ENCODE measurements at regions of chr1 and their contacts with region 1.

Region 1: DNA sequence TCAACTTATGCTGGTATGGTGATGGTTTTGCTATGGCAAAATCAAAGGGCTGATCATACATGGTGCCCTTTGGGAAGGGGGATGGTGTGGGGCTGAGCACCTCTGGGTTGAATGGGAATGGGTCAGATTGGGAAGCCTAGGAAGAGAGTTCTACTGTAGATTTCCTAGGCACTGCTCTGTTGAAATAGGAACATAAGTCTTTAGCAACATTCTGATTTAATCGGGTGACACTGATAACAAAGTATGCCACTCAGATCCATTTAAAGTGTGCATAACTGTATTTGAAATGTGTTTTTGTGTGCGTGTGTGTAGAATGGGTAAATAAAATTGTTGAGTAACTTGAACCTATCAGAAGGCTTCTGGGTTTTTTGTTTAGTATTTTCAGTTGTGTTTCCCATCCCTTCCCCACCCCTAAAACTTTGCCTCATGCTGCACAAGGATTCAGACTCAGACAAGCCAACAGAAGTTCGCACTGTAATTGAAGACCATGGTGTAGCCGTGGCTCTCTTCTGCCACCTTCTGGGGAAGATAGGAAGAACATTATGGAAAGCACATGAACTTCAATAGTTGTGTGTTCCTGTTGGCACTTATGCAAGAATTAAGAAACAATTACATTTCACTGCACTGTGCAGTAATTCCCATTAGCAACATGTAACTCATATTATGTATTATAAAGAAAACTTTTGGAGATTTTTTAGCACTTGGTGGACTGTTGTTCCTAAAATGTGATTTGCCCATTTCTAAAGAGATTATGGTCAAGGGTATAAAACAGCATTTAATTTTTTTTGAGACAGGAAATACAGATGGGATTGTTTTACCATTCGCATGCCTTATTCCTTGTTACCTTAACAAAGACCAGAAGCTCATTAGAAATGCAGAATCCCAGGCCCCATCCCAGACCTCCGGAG is 10.9 kb upstream of the C4BPB start:
- DNase-seq: no peak
- H3K4me3 ChIP-seq: no peak overlapping the region
- H3K27ac ChIP-seq: no peak overlapping the region
- H3K4me1 ChIP-seq: peaks cover 0 to 30% (median 5%) of the 10 kb centered on the region in 4 donors
- H3K27me3 ChIP-seq: no peaks in the 10 kb centered on the region
- CTCF ChIP-seq: peak; percentile 77 to 89 (median 81)
- EP300 ChIP-seq: no peak
- POLR2A ChIP-seq: no peak

Region 2: DNA sequence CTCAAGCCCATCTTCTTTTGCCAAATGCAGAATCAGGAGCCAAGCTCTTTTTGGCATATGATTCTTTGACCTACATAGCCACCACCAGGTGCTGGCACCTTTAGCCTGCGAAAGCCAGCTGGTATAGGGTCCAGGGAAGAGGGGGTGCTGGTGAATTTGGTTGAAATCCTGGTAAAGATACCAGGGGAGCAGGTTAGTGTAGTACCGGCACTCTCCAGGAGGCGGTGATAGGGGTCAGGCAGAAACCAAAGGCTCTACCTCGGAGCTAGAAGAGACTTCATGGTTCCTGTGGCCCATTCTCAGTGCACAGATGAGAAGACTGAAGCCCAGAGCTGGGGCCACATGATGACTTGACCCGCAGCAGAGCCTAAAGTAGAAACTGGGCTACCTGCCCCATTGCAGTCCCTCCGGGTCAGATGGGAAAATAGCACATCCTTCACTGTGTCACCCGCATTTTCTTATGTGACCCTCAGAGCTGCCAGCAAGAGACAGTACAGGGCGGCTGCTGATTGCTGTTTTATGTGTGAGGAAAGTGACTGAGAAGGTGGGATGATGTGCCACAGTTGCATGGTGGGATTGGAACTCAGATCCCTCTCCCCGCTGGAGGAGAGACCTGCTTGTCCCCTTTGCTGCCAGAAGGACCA is 343.1 kb before region 1 on chr1:
- intact Hi-C with region 1: loop called (anchors 10 kb)
- DNase-seq: no peak
- H3K4me3 ChIP-seq: no peak overlapping the region
- H3K27ac ChIP-seq: no peak overlapping the region
- H3K4me1 ChIP-seq: peaks cover 19 to 41% (median 33%) of the 10 kb centered on the region in 4 donors
- H3K27me3 ChIP-seq: no peaks in the 10 kb centered on the region
- CTCF ChIP-seq: peak; percentile 51 to 77 (median 60)
- EP300 ChIP-seq: no peak
- POLR2A ChIP-seq: no peak

Region 3: GRCh38 chr1:207052911-207053769 is 24.6 kb before region 1 on chr1 and contains the start of gene PFKFB2:
- intact Hi-C with region 1: loop called (anchors 2 kb)
- DNase-seq: peak; percentile 98
- H3K4me3 ChIP-seq: peak within 1 kb of the TSS; percentile 67 to 78 (median 69)
- H3K27ac ChIP-seq: peak within 1 kb of the TSS; percentile 90 to 93 (median 93)
- H3K4me1 ChIP-seq: peaks cover 25 to 41% (median 39%) of the 10 kb centered on the region in 4 donors
- H3K27me3 ChIP-seq: no peaks in the 10 kb centered on the region
- CTCF ChIP-seq: peak in 2 of 3 experiments; percentile 21 to 46
- EP300 ChIP-seq: no peak
- POLR2A ChIP-seq: peak; percentile 78
- total RNA-seq, gene PFKFB2: 3.7 to 5.3 (median 4.1) TPM

Region 4: GRCh38 chr1:207284209-207284897 is 206.6 kb after region 1 on chr1:
- intact Hi-C with region 1: no loop called
- DNase-seq: no peak
- H3K4me3 ChIP-seq: no peak overlapping the region
- H3K27ac ChIP-seq: no peak overlapping the region
- H3K4me1 ChIP-seq: peaks cover 7 to 41% (median 27%) of the 10 kb centered on the region in 4 donors
- H3K27me3 ChIP-seq: no peaks in the 10 kb centered on the region
- CTCF ChIP-seq: no peak
- EP300 ChIP-seq: no peak
- POLR2A ChIP-seq: no peak

Region 5: DNA sequence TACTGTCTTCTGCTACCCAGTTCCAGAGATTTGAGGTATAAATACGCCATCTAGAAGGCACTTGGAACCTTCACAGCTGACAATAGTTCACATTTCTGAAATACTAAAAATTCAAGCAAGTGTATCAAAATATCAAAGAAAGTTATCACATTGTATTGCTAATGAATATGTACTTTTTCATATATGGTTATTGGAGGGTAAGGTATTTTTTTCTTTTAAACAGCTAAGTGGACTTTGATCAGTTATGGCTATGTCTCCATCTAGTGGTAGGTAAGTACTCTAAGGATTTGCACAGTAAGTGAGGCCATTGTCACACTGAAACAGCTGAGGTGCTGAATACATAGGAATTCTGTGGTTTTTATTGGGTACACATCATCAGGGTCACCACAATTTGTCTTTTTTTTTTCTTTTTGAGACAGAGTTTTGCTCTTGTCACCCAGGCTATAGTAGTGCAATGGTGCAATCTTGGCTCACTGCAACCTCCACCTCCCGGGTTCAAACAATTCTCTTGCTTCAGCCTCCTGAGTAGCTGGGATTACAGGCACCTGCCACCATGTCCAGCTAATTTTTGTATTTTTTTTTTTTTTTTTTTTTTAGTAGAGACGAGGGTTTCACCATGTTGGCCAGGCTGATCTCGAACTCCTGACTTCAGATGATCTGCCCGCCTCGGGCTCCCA is 327.3 kb after region 1 on chr1:
- intact Hi-C with region 1: loop called (anchors 5 kb)
- DNase-seq: no peak
- H3K4me3 ChIP-seq: no peak overlapping the region
- H3K27ac ChIP-seq: no peak overlapping the region
- H3K4me1 ChIP-seq: no peaks in the 10 kb centered on the region
- H3K27me3 ChIP-seq: peaks cover 0 to 3% (median 0%) of the 10 kb centered on the region in 4 donors
- CTCF ChIP-seq: peak; percentile 62 to 73 (median 67)
- EP300 ChIP-seq: no peak
- POLR2A ChIP-seq: no peak

Measured in esophagus muscularis mucosa (tissue), 4 donors.